Posterior cingulate gyrus (tissue), 11 donors: ENCODE measurements at regions of chr10 and their contacts with region 1.

Region 1: GRCh38 chr10:6151087-6151977 is 51.4 kb upstream of the PFKFB3 start:
- DNase-seq: peak; percentile 48 to 94 (median 70)

Region 2: GRCh38 chr10:5944389-5945189 is 206.7 kb before region 1 on chr10:
- intact Hi-C with region 1: no loop called
- DNase-seq: peak in 5 of 10 donors; percentile 21 to 82 (median 59)

Region 3: DNA sequence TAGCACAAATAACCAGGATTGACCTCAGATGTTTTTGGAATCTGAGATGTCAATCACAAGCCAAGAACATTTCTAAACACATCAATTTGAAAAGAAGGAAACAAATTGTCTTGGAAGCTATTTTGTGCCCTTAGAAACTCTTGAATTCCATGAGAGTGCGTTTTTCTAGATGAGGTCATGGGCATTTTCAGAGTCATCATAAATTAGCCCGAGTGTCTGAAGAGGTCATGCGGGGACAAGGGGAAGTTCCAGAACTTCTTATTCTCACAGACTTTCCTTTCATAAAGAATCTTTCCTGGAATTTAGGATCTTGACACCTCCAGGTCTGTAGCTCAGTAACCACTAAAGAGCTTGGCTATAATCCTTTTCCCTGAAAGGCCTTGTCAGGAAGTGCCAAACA is 117.4 kb before region 1 on chr10:
- intact Hi-C with region 1: no loop called
- DNase-seq: no peak

Region 4: GRCh38 chr10:6108603-6109443 is 42.5 kb before region 1 on chr10:
- intact Hi-C with region 1: loop called (anchors 1 kb)
- DNase-seq: no peak